AG04450 (cell line): ENCODE measurements at regions of chr6 and their contacts with region 1.

Region 1: GRCh38 chr6:84220809-84221409 is 6.5 kb downstream of the CEP162 start:
- DNase-seq: no peak
- H3K4me3 ChIP-seq: no peak overlapping the region
- H3K27ac ChIP-seq: no peak overlapping the region
- H3K27me3 ChIP-seq: no peaks in the 10 kb centered on the region
- CTCF ChIP-seq: peak; percentile 50

Region 2: GRCh38 chr6:83884523-83884922 is 336.4 kb before region 1 on chr6:
- CTCF ChIA-PET with region 1: interaction called, 108 read pairs
- POLR2A ChIA-PET with region 1: no interaction called
- DNase-seq: no peak
- H3K4me3 ChIP-seq: no peak overlapping the region
- H3K27ac ChIP-seq: no peak overlapping the region
- H3K27me3 ChIP-seq: no peaks in the 10 kb centered on the region
- CTCF ChIP-seq: peak; percentile 67